Naive thymus-derived CD4-positive, alpha-beta T cell (primary cell): ENCODE measurements at regions of chr4 and their contacts with region 1.

Region 1: GRCh38 chr4:78951862-78952472 is 12.7 kb upstream of the PAQR3 start:
- DNase-seq: peak in 6 of 9 donors; percentile 19 to 43 (median 38)
- ATAC-seq: peak; percentile 85
- H3K4me3 ChIP-seq: no peak overlapping the region
- H3K4me3 Mint-ChIP-seq: no peak overlapping the region
- H3K27ac ChIP-seq: no peak overlapping the region
- H3K27ac Mint-ChIP-seq: no peak overlapping the region
- H3K4me1 ChIP-seq: no peaks in the 10 kb centered on the region
- H3K4me1 Mint-ChIP-seq: no peaks in the 10 kb centered on the region
- H3K27me3 ChIP-seq: no peaks in the 10 kb centered on the region
- H3K27me3 Mint-ChIP-seq: peaks cover 0 to 36% (median 22%) of the 10 kb centered on the region in 5 donors

Region 2: DNA sequence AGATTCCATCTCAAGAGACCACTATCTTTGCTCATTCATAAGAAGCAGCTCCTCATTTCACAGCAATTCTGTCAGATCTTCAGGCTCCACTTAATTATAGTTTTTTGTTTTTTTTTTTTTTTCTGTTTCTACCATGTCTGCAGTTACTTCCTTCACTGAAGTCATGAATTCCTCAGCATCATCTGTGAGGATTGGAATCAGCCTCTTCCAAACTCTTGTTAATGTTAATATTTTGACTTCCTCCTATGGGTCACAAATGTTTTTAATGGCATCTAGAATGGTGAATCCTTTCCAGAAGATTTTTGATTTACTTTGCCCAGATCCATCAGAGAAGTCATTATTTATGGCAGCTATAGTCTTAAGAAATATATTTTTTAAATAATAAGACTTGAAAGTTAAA is 122.7 kb before region 1 on chr4:
- CTCF ChIA-PET with region 1: no interaction called
- POLR2A ChIA-PET with region 1: no interaction called
- intact Hi-C with region 1: no loop called
- DNase-seq: no peak
- ATAC-seq: no peak
- H3K4me3 ChIP-seq: no peak overlapping the region
- H3K4me3 Mint-ChIP-seq: no peak overlapping the region
- H3K27ac ChIP-seq: no peak overlapping the region
- H3K27ac Mint-ChIP-seq: no peak overlapping the region
- H3K4me1 ChIP-seq: no peaks in the 10 kb centered on the region
- H3K4me1 Mint-ChIP-seq: peaks cover 0 to 5% (median 0%) of the 10 kb centered on the region in 7 donors
- H3K27me3 ChIP-seq: no peaks in the 10 kb centered on the region
- H3K27me3 Mint-ChIP-seq: no peaks in the 10 kb centered on the region

Region 3: GRCh38 chr4:78938868-78939666 is 12.9 kb before region 1 on chr4 and contains the start of gene PAQR3:
- CTCF ChIA-PET with region 1: interaction called, 14 read pairs
- POLR2A ChIA-PET with region 1: no interaction called
- intact Hi-C with region 1: no loop called
- DNase-seq: peak; percentile 70 to 91 (median 86)
- ATAC-seq: peak; percentile 98
- H3K4me3 ChIP-seq: peak within 1 kb of the TSS; percentile 86
- H3K4me3 Mint-ChIP-seq: peak within 1 kb of the TSS; percentile 92 to 100 (median 98)
- H3K27ac ChIP-seq: peak within 1 kb of the TSS; percentile 82
- H3K27ac Mint-ChIP-seq: peak within 1 kb of the TSS; percentile 82 to 97 (median 92)
- H3K4me1 ChIP-seq: peaks cover 5 to 14% of the 10 kb centered on the region in 2 donors
- H3K4me1 Mint-ChIP-seq: peaks cover 23 to 54% (median 39%) of the 10 kb centered on the region in 7 donors
- H3K27me3 ChIP-seq: no peaks in the 10 kb centered on the region
- H3K27me3 Mint-ChIP-seq: peaks cover 8 to 18% (median 11%) of the 10 kb centered on the region in 5 donors
- total RNA-seq, gene PAQR3: 13.1 to 24.3 (median 15.8) TPM

Region 4: DNA sequence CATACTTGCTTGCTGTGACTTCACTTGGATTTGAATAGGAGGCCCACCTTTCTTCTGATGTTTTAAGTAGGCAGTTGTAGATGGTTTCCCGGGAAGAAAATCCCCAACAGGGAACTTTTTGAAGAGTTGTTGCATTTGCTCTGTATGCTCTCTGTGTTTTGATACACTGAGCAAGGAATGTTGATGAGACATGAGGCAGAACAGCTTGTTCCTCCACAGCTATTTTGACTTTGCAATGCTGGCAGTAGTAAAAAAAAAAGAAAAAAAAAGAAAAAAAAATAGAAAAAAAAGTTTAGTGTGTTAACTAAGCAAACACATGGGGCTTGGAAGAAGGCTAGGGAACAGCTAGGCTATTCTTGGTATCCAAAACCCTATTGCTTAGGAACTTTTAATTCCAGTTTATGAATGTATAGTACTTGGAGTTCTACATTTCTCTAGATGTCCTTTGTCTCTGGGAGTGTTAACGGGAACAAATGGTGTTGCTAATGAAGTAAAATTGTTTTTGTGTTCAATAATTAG is 10.7 kb after region 1 on chr4:
- CTCF ChIA-PET with region 1: interaction called, 13 read pairs
- POLR2A ChIA-PET with region 1: no interaction called
- intact Hi-C with region 1: no loop called
- DNase-seq: no peak
- ATAC-seq: no peak
- H3K4me3 ChIP-seq: no peak overlapping the region
- H3K4me3 Mint-ChIP-seq: no peak overlapping the region
- H3K27ac ChIP-seq: no peak overlapping the region
- H3K27ac Mint-ChIP-seq: no peak overlapping the region
- H3K4me1 ChIP-seq: no peaks in the 10 kb centered on the region
- H3K4me1 Mint-ChIP-seq: no peaks in the 10 kb centered on the region
- H3K27me3 ChIP-seq: no peaks in the 10 kb centered on the region
- H3K27me3 Mint-ChIP-seq: peaks cover 0 to 11% (median 4%) of the 10 kb centered on the region in 5 donors

Region 5: DNA sequence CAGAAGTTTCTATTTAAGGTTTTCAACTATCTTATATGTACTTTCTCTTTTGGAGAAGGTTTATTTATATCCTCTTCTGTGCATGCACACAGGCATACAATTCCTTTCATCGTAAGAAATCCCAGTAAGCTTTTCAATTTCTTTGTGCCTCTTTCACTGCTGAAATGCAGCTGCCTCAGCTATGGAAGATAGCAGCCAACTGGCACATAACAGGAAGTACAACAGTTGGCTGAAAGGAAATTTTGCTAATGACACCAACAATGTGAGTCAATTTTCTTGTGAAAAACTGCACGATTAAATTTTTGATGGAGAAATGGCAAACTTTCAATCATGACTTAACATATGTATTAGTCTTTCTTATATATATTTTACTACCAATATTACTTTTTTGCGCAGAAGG is 61.8 kb after region 1 on chr4:
- CTCF ChIA-PET with region 1: no interaction called
- POLR2A ChIA-PET with region 1: no interaction called
- intact Hi-C with region 1: no loop called
- DNase-seq: no peak
- ATAC-seq: no peak
- H3K4me3 ChIP-seq: no peak overlapping the region
- H3K4me3 Mint-ChIP-seq: no peak overlapping the region
- H3K27ac ChIP-seq: no peak overlapping the region
- H3K27ac Mint-ChIP-seq: no peak overlapping the region
- H3K4me1 ChIP-seq: no peaks in the 10 kb centered on the region
- H3K4me1 Mint-ChIP-seq: no peaks in the 10 kb centered on the region
- H3K27me3 ChIP-seq: no peaks in the 10 kb centered on the region
- H3K27me3 Mint-ChIP-seq: peaks cover 5 to 21% (median 18%) of the 10 kb centered on the region in 5 donors

Region 6: DNA sequence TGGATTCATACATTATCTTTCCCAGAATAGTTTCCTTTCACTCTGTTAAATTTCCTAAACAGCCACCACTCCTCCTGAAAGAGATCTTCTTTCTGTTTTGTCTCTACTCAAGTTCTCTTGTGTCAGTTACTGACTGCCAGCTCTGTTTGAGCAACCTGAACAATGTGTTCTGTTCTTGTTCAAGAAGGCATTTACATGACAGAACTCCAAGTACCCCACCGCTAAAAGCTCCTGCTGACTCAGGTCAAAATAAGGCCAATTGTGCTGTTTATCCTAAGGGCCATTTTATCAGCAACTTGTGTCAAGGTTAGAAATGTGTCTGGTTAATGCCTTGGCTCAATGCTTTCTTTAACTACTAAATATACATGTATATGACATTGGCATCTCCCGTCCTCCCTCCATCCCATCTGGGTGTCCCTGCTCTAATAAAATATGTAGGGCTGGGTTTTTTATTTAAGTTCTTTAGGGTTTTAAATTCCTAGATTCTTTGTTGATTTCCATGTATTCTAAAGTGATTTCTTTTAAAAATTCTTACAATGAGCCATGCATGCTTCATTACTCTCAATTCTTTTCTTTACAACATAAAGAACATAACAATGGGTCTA is 131.5 kb after region 1 on chr4:
- CTCF ChIA-PET with region 1: no interaction called
- POLR2A ChIA-PET with region 1: no interaction called
- intact Hi-C with region 1: no loop called
- DNase-seq: no peak
- ATAC-seq: no peak
- H3K4me3 ChIP-seq: no peak overlapping the region
- H3K4me3 Mint-ChIP-seq: no peak overlapping the region
- H3K27ac ChIP-seq: no peak overlapping the region
- H3K27ac Mint-ChIP-seq: no peak overlapping the region
- H3K4me1 ChIP-seq: no peaks in the 10 kb centered on the region
- H3K4me1 Mint-ChIP-seq: no peaks in the 10 kb centered on the region
- H3K27me3 ChIP-seq: no peaks in the 10 kb centered on the region
- H3K27me3 Mint-ChIP-seq: peaks cover 0 to 10% (median 4%) of the 10 kb centered on the region in 5 donors

Region 7: GRCh38 chr4:79576429-79576753 is 624.4 kb after region 1 on chr4:
- CTCF ChIA-PET with region 1: no interaction called
- POLR2A ChIA-PET with region 1: no interaction called
- intact Hi-C with region 1: loop called (anchors 1 kb)
- DNase-seq: peak in 2 of 9 donors; percentile 1 to 16
- ATAC-seq: peak; percentile 57
- H3K4me3 ChIP-seq: no peak overlapping the region
- H3K4me3 Mint-ChIP-seq: no peak overlapping the region
- H3K27ac ChIP-seq: no peak overlapping the region
- H3K27ac Mint-ChIP-seq: no peak overlapping the region
- H3K4me1 ChIP-seq: no peaks in the 10 kb centered on the region
- H3K4me1 Mint-ChIP-seq: no peaks in the 10 kb centered on the region
- H3K27me3 ChIP-seq: no peaks in the 10 kb centered on the region
- H3K27me3 Mint-ChIP-seq: peaks cover 0 to 17% (median 3%) of the 10 kb centered on the region in 5 donors

Region 8: GRCh38 chr4:79917246-79917645 is 965.3 kb after region 1 on chr4:
- CTCF ChIA-PET with region 1: no interaction called
- POLR2A ChIA-PET with region 1: no interaction called
- intact Hi-C with region 1: loop called (anchors 5 kb)
- DNase-seq: peak in 7 of 9 donors; percentile 10 to 43 (median 22)
- ATAC-seq: peak; percentile 62
- H3K4me3 ChIP-seq: no peak overlapping the region
- H3K4me3 Mint-ChIP-seq: no peak overlapping the region
- H3K27ac ChIP-seq: no peak overlapping the region
- H3K27ac Mint-ChIP-seq: no peak overlapping the region
- H3K4me1 ChIP-seq: no peaks in the 10 kb centered on the region
- H3K4me1 Mint-ChIP-seq: peaks cover 0 to 16% (median 6%) of the 10 kb centered on the region in 7 donors
- H3K27me3 ChIP-seq: no peaks in the 10 kb centered on the region
- H3K27me3 Mint-ChIP-seq: no peaks in the 10 kb centered on the region

Region 9: DNA sequence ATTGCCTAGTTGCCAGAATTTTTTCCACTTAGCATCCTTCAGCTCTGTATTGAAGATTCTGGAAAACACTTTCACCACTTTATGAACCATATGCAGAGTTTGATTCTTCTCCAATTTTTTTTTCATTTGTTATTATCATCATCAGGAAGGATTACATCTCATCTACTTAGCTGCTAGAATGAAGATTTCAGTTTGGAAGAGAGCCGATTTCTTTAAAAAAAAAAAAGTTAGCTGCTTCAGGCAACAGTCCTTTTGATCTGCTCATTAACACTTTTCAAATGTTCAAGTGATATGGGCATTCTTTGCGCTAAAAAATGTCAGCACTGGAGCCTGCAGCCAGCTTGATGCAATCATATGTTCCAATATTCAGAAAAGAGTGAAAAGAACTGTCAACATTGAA is 1044.9 kb after region 1 on chr4:
- CTCF ChIA-PET with region 1: no interaction called
- POLR2A ChIA-PET with region 1: no interaction called
- intact Hi-C with region 1: no loop called
- DNase-seq: no peak
- ATAC-seq: no peak
- H3K4me3 ChIP-seq: no peak overlapping the region
- H3K4me3 Mint-ChIP-seq: no peak overlapping the region
- H3K27ac ChIP-seq: no peak overlapping the region
- H3K27ac Mint-ChIP-seq: peak overlapping the region in 1 of 9 donors; percentile 71
- H3K4me1 ChIP-seq: no peaks in the 10 kb centered on the region
- H3K4me1 Mint-ChIP-seq: peaks cover 14 to 63% (median 52%) of the 10 kb centered on the region in 7 donors
- H3K27me3 ChIP-seq: no peaks in the 10 kb centered on the region
- H3K27me3 Mint-ChIP-seq: no peaks in the 10 kb centered on the region

Region 10: DNA sequence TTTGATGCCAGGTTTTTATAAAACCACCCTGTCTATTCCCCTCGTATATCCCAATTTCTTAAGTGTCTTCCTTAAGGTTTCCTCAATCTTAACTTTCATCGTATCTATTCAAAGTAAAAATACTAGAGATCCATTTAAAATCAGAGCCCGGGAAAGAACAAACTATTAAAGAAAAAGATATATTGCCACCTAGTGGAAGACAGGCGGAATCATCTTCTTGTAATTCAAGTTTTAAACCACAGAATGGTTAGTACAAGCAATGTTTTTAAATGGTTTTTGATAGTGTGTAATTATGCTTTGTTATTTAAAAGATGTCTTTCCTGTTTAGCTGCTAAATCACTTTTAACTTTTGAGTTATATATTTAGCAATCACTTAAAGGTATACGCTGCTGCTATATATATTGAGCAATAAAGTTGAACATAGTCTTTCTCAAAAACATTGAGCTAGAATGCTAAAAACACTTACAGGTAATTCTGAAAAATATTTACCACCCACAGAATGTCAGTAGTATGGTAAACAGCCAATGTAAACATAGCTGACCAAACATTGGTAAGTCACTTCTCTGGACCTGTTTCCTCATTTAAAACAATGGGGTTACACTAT is 1263.6 kb after region 1 on chr4:
- CTCF ChIA-PET with region 1: interaction called, 3 read pairs
- POLR2A ChIA-PET with region 1: no interaction called
- intact Hi-C with region 1: loop called (anchors 1 kb)
- DNase-seq: peak in 6 of 9 donors; percentile 28 to 57 (median 38)
- ATAC-seq: peak; percentile 61
- H3K4me3 ChIP-seq: no peak overlapping the region
- H3K4me3 Mint-ChIP-seq: peak overlapping the region in 2 of 10 donors; percentile 20 to 28
- H3K27ac ChIP-seq: no peak overlapping the region
- H3K27ac Mint-ChIP-seq: no peak overlapping the region
- H3K4me1 ChIP-seq: no peaks in the 10 kb centered on the region
- H3K4me1 Mint-ChIP-seq: peaks cover 0 to 7% (median 0%) of the 10 kb centered on the region in 7 donors
- H3K27me3 ChIP-seq: peaks cover 0 to 4% of the 10 kb centered on the region in 2 donors
- H3K27me3 Mint-ChIP-seq: peaks cover 0 to 61% (median 37%) of the 10 kb centered on the region in 5 donors